ENCODE measurements at regions of chr12 and their contacts with region 1.

Region 1: GRCh38 chr12:751192-751998 is 984 bp upstream of the WNK1 start:
- DNase-seq: peak; percentile 77

Region 2: GRCh38 chr12:569803-570434 is 181.5 kb before region 1 on chr12:
- CTCF ChIA-PET with region 1: interaction called, 17 read pairs
- POLR2A ChIA-PET with region 1: interaction called, 43 read pairs
- DNase-seq: peak; percentile 93

Region 3: GRCh38 chr12:575948-576612 is 175.3 kb before region 1 on chr12:
- CTCF ChIA-PET with region 1: interaction called, 23 read pairs
- POLR2A ChIA-PET with region 1: interaction called, 43 read pairs
- DNase-seq: peak; percentile 93

Region 4: GRCh38 chr12:614411-614970 is 136.9 kb before region 1 on chr12:
- CTCF ChIA-PET with region 1: interaction called, 16 read pairs
- POLR2A ChIA-PET with region 1: interaction called, 19 read pairs
- DNase-seq: no peak

Region 5: GRCh38 chr12:681568-682256 is 69.7 kb before region 1 on chr12:
- CTCF ChIA-PET with region 1: no interaction called
- POLR2A ChIA-PET with region 1: no interaction called
- DNase-seq: no peak

Region 6: GRCh38 chr12:738712-739111 is 12.7 kb before region 1 on chr12:
- CTCF ChIA-PET with region 1: interaction called, 8 read pairs
- POLR2A ChIA-PET with region 1: interaction called, 14 read pairs
- DNase-seq: no peak

Region 7: GRCh38 chr12:779745-780734 is 28.6 kb after region 1 on chr12:
- CTCF ChIA-PET with region 1: interaction called, 6 read pairs
- POLR2A ChIA-PET with region 1: interaction called, 17 read pairs
- DNase-seq: no peak

Region 8: DNA sequence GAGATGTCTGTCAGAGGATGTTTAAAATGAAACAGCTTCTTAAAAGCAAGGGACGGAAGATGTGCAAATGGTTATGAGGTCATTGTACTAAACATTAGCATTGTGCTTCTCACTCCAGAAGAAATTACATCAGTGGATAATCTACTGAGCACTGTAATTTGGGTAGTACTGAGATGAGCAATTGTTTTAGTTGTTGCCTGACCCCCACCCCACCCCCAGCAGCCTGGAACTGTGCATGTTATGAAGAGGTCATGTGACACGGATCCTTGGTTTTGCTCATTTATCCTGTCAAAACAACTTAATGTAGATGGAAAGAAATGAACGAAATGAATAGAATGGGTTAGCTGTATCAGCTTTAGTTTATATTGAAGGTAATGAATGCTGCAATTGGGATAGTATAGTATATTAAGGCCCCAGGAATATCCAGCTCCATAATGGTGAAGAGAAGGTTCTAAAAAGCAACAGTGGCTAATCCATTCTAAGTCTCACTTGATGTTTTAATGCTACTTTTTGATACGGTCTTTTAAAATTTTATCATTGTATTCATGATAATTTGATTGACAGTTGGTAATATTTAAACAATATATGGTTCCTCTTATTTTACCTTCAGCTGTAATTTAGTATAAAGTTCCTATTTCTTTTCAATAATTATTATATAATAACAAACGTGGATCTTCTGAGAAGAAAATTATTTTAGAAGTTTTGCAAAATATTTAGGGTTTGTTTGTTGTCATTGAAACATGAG is 59.4 kb after region 1 on chr12:
- CTCF ChIA-PET with region 1: interaction called, 17 read pairs
- POLR2A ChIA-PET with region 1: interaction called, 15 read pairs
- DNase-seq: no peak

Region 9: GRCh38 chr12:835754-836518 is 84.5 kb after region 1 on chr12:
- CTCF ChIA-PET with region 1: no interaction called
- POLR2A ChIA-PET with region 1: no interaction called
- DNase-seq: no peak